ENCODE measurements at regions of chr2 and their contacts with region 1.

Region 1: DNA sequence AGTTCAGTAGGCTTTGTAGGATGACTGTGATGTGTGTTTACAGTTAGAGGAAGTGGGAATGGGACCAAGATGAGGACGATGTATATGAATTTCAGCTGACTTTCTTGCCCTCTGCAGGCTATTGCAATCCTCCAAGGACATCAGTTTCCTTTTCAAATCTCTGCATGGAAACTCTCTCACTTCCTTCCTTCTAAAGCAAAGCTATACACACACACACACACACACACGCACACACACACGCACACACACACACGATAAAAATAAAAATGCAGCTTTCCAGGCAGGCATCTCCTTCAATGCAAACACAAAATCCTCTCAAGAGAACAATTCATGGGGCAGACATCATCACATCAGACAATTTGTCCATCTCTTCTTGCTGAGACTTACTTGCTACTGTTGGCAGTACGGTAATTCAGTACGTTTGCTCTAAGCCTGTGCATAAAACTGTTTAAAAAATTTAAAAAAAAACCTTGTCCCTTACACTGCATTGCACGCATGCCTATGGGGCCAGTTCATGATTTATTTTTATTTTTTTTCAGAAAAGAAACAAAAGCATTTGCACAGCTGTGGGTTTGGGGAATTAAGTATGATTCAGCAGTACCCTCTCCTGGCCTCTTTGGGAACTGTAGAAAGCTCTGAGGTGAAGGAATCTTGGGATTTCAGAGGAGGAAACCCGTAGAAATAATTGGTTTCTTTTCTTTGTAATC is 27.1 kb upstream of the ICOS start:
- DNase-seq: peak in 1 of 2 donors; percentile 63
- ATAC-seq: peak; percentile 82 to 94 (median 86)
- H3K4me3 ChIP-seq: peak overlapping the region in 7 of 10 donors; percentile 19 to 48 (median 35)
- H3K27ac ChIP-seq: peak overlapping the region in 6 of 10 donors; percentile 20 to 86 (median 48)
- H3K4me1 ChIP-seq: peaks cover 3 to 28% (median 7%) of the 10 kb centered on the region in 9 donors
- H3K27me3 ChIP-seq: no peaks in the 10 kb centered on the region
- CTCF ChIP-seq: peak; percentile 50 to 89 (median 82)

Region 2: GRCh38 chr2:203484266-203485112 is 424.9 kb before region 1 on chr2:
- intact Hi-C with region 1: loop called in 9 of 10 experiments (anchors 2 to 10 kb)
- DNase-seq: peak in 1 of 2 donors; percentile 19
- ATAC-seq: peak; percentile 71 to 91 (median 82)
- H3K4me3 ChIP-seq: no peak overlapping the region
- H3K27ac ChIP-seq: no peak overlapping the region
- H3K4me1 ChIP-seq: peaks cover 0 to 6% (median 0%) of the 10 kb centered on the region in 9 donors
- H3K27me3 ChIP-seq: no peaks in the 10 kb centered on the region
- CTCF ChIP-seq: peak; percentile 48 to 79 (median 70)

Region 3: GRCh38 chr2:203498161-203498560 is 411.3 kb before region 1 on chr2:
- intact Hi-C with region 1: loop called in 1 of 10 experiments (anchors 10 kb)
- DNase-seq: no peak
- ATAC-seq: peak in 6 of 8 donors; percentile 41 to 85 (median 64)
- H3K4me3 ChIP-seq: no peak overlapping the region
- H3K27ac ChIP-seq: peak overlapping the region in 4 of 10 donors; percentile 3 to 24 (median 10)
- H3K4me1 ChIP-seq: peaks cover 0 to 54% (median 14%) of the 10 kb centered on the region in 9 donors
- H3K27me3 ChIP-seq: no peaks in the 10 kb centered on the region
- CTCF ChIP-seq: no peak

Region 4: DNA sequence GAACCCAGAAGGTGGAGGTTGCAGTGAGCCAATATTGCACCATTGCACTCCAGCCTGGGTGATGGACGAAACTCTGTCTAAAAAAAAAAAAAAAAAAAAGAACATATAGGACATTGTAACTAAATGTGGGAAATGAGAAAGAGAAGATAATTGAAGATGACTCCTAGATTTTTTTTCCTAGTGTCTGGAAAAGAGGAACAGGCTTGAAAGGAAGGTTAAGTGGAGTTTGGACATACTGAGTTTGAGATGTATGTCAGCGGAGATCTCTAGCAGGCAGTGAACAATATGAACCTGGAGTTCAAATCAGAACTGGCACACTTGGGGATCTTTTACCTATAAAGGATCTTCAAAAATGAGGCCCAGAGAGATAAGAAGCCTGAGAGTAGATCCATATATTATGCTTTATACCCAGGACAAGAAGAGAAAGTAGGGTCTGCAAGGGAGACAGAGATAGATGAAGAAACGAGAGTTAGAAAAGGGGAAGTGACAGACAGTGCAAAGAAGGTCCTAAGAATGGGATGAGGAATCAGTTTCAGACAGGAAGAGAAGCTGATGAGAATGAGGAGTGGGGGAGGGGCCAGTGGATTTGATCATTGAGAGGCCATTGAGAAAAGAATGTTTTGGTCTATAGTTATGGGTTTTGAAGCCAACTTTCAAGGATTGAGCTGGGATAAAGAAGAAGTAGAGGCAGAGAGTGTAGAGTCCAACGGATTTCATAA is 249.9 kb before region 1 on chr2:
- intact Hi-C with region 1: loop called in 2 of 10 experiments (anchors 10 kb)
- DNase-seq: no peak
- ATAC-seq: peak in 1 of 8 donors; percentile 13
- H3K4me3 ChIP-seq: no peak overlapping the region
- H3K27ac ChIP-seq: peak overlapping the region in 3 of 10 donors; percentile 7 to 70 (median 7)
- H3K4me1 ChIP-seq: peaks cover 0 to 41% (median 0%) of the 10 kb centered on the region in 9 donors
- H3K27me3 ChIP-seq: no peaks in the 10 kb centered on the region
- CTCF ChIP-seq: no peak

Region 5: DNA sequence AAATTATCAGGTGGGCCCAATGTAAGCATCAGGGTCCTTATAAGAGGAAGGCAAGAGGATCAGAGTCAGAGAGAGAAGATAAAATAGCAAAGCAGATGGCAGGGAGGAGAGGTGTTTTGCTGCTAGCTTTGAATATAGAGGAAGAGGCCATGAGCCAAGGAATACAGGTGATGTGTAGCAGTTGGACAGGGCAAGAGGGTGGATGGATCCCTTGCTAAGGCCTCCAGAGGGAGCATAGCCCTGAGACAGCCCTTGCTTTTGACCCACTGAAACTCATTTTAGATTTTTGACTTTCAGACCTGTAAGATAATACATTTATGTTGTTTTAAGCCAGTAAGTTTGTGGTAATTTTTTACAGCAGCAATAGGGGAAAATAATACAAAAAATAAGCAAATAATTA is 519.3 kb after region 1 on chr2:
- intact Hi-C with region 1: no loop called
- DNase-seq: no peak
- ATAC-seq: no peak
- H3K4me3 ChIP-seq: no peak overlapping the region
- H3K27ac ChIP-seq: no peak overlapping the region
- H3K4me1 ChIP-seq: no peaks in the 10 kb centered on the region
- H3K27me3 ChIP-seq: no peaks in the 10 kb centered on the region
- CTCF ChIP-seq: no peak

Measured in heart right ventricle (tissue), 16 donors.